ENCODE measurements at regions of chr10 and their contacts with region 1.

Region 1: GRCh38 chr10:13775786-13776780 is 189.3 kb downstream of the PRPF18 start:
- DNase-seq: peak; percentile 79
- H3K27ac ChIP-seq: peak overlapping the region; percentile 63
- CTCF ChIP-seq: no peak

Region 2: GRCh38 chr10:13659897-13660550 is 116.1 kb before region 1 on chr10:
- CTCF ChIA-PET with region 1: interaction called, 10 read pairs
- POLR2A ChIA-PET with region 1: no interaction called
- DNase-seq: peak; percentile 68
- H3K27ac ChIP-seq: peak overlapping the region; percentile 91
- CTCF ChIP-seq: peak; percentile 90

Region 3: DNA sequence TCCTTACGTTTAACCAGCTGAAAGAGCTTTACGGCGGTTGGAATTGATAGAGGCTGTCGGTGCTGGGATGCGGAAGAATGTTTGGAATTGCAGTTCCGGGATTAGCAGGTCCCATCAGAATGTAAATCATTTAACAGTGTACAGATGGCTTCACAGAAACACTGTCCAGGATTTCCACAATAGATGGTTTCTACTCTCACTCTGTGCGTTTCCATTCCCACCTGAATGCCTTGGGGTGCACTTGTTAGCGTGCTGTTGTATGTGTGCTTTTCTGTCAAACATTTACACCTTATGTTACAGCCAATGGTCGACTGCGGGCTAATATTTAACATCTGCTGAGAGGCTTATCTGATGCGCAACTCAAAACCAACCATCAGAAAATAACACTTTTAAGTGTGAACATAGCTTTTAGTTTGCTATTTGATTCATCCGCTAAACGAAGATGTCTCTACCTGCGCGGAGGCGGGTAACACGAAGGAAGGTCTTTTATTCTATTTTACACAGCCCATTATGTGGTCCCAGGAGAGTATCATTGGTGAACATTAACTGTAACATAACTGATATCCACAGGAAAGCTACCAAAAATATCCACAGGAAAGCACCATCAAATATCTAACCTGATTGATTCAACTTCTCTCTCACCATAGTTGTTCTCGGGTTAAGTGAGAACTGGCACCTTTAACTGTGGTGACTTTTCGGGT is 10.3 kb before region 1 on chr10:
- CTCF ChIA-PET with region 1: no interaction called
- POLR2A ChIA-PET with region 1: no interaction called
- DNase-seq: no peak
- H3K27ac ChIP-seq: no peak overlapping the region
- CTCF ChIP-seq: no peak